ENCODE measurements at regions of chr12 and their contacts with region 1.

Region 1: GRCh38 chr12:104720339-104721038 is 237.6 kb downstream of the SLC41A2 start:
- DNase-seq: peak; percentile 52 to 93 (median 64)
- ATAC-seq: peak; percentile 78
- H3K4me3 ChIP-seq: peak overlapping the region; percentile 54
- H3K4me3 Mint-ChIP-seq: peak overlapping the region; percentile 73
- H3K27ac ChIP-seq: peak overlapping the region; percentile 77 to 87
- H3K27ac Mint-ChIP-seq: peak overlapping the region; percentile 89
- H3K4me1 ChIP-seq: peaks cover 49% of the 10 kb centered on the region
- H3K4me1 Mint-ChIP-seq: peaks cover 72% of the 10 kb centered on the region
- H3K27me3 ChIP-seq: no peaks in the 10 kb centered on the region
- H3K27me3 Mint-ChIP-seq: no peaks in the 10 kb centered on the region
- CTCF ChIP-seq: no peak

Region 2: GRCh38 chr12:104494137-104494792 is 226.2 kb before region 1 on chr12:
- CTCF ChIA-PET with region 1: no interaction called
- POLR2A ChIA-PET with region 1: interaction called, 3 read pairs
- intact Hi-C with region 1: loop called in 1 of 2 experiments (anchors 5 kb)
- DNase-seq: peak in 12 of 14 experiments; percentile 32 to 67 (median 50)
- ATAC-seq: peak; percentile 48
- H3K4me3 ChIP-seq: peak overlapping the region; percentile 29
- H3K4me3 Mint-ChIP-seq: peak overlapping the region; percentile 80
- H3K27ac ChIP-seq: peak overlapping the region; percentile 58 to 64
- H3K27ac Mint-ChIP-seq: peak overlapping the region; percentile 95
- H3K4me1 ChIP-seq: peaks cover 65% of the 10 kb centered on the region
- H3K4me1 Mint-ChIP-seq: peaks cover 91% of the 10 kb centered on the region
- H3K27me3 ChIP-seq: no peaks in the 10 kb centered on the region
- H3K27me3 Mint-ChIP-seq: no peaks in the 10 kb centered on the region
- CTCF ChIP-seq: no peak

Region 3: DNA sequence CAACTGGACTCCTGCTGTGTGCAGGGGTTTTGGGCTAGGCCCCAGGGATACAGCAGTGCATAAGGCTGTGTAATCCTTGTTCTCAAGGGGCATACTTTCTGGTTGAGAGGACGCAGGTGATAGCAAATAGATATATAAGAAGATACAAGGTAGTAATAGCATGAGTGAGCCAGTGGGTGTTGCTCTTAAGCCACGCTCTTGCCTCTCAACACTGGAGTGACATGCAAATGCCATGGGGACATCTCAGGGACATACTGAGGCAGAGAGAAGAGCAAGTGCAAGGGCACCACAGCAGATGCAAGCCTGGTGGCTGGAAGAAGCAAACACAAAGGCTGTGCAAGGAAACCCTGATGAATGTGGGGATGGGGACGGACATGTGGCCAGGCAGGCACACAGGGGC is 40.4 kb before region 1 on chr12:
- CTCF ChIA-PET with region 1: no interaction called
- POLR2A ChIA-PET with region 1: interaction called, 3 read pairs
- intact Hi-C with region 1: loop called in 1 of 2 experiments (anchors 2 kb)
- DNase-seq: peak in 9 of 14 experiments; percentile 13 to 71 (median 25)
- ATAC-seq: peak; percentile 56
- H3K4me3 ChIP-seq: no peak overlapping the region
- H3K4me3 Mint-ChIP-seq: peak overlapping the region; percentile 43
- H3K27ac ChIP-seq: no peak overlapping the region
- H3K27ac Mint-ChIP-seq: peak overlapping the region; percentile 74
- H3K4me1 ChIP-seq: peaks cover 52% of the 10 kb centered on the region
- H3K4me1 Mint-ChIP-seq: peaks cover 59% of the 10 kb centered on the region
- H3K27me3 ChIP-seq: no peaks in the 10 kb centered on the region
- H3K27me3 Mint-ChIP-seq: no peaks in the 10 kb centered on the region
- CTCF ChIP-seq: no peak

Region 4: DNA sequence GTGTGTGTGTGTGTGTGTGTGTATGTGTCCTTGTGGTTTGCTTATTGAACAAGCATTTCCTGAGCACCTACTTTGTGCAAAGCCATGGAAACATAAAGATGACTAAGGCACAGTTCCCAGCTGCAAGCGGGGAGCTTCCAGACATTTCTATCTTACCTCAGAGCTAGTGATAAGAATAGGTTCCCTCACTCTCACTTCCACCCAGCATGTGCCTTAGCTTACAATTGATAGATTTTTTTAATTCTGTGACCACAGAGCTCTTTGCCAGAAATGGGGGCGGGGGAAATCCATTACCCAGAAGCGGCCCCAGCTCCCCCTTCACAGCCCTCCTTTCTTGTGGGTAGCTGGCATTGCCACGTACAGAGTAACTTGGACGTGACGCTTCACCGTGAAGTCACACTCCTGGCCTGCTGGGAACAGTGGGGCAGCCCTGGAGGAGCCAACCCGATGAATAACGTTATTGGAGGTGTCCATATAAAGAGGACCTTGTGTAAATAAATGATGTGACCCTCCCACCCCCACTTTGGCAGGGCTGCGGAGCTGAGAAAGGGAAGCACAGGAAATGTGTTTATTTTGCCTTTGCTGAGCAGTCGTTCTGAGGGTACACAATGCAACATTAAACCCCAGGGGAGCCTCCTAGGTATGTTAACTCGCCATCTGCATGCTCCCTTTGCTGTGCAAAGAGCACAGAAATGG is 24.9 kb before region 1 on chr12:
- CTCF ChIA-PET with region 1: interaction called, 3 read pairs
- POLR2A ChIA-PET with region 1: interaction called, 14 read pairs
- intact Hi-C with region 1: loop called in 1 of 2 experiments (anchors 2 kb)
- DNase-seq: peak in 11 of 14 experiments; percentile 26 to 94 (median 56)
- ATAC-seq: peak; percentile 86
- H3K4me3 ChIP-seq: no peak overlapping the region
- H3K4me3 Mint-ChIP-seq: peak overlapping the region; percentile 9
- H3K27ac ChIP-seq: no peak overlapping the region
- H3K27ac Mint-ChIP-seq: peak overlapping the region; percentile 78
- H3K4me1 ChIP-seq: peaks cover 49% of the 10 kb centered on the region
- H3K4me1 Mint-ChIP-seq: peaks cover 67% of the 10 kb centered on the region
- H3K27me3 ChIP-seq: no peaks in the 10 kb centered on the region
- H3K27me3 Mint-ChIP-seq: no peaks in the 10 kb centered on the region
- CTCF ChIP-seq: no peak

Region 5: GRCh38 chr12:105352052-105352451 is 631.6 kb after region 1 on chr12:
- CTCF ChIA-PET with region 1: no interaction called
- POLR2A ChIA-PET with region 1: no interaction called
- intact Hi-C with region 1: no loop called
- DNase-seq: no peak
- ATAC-seq: no peak
- H3K4me3 ChIP-seq: no peak overlapping the region
- H3K4me3 Mint-ChIP-seq: no peak overlapping the region
- H3K27ac ChIP-seq: no peak overlapping the region
- H3K27ac Mint-ChIP-seq: no peak overlapping the region
- H3K4me1 ChIP-seq: peaks cover 4% of the 10 kb centered on the region
- H3K4me1 Mint-ChIP-seq: peaks cover 12% of the 10 kb centered on the region
- H3K27me3 ChIP-seq: no peaks in the 10 kb centered on the region
- H3K27me3 Mint-ChIP-seq: no peaks in the 10 kb centered on the region
- CTCF ChIP-seq: no peak

Measured in CD4-positive, alpha-beta T cell (primary cell).